AG04449 (cell line): ENCODE measurements at regions of chr21 and their contacts with region 1.

Region 1: DNA sequence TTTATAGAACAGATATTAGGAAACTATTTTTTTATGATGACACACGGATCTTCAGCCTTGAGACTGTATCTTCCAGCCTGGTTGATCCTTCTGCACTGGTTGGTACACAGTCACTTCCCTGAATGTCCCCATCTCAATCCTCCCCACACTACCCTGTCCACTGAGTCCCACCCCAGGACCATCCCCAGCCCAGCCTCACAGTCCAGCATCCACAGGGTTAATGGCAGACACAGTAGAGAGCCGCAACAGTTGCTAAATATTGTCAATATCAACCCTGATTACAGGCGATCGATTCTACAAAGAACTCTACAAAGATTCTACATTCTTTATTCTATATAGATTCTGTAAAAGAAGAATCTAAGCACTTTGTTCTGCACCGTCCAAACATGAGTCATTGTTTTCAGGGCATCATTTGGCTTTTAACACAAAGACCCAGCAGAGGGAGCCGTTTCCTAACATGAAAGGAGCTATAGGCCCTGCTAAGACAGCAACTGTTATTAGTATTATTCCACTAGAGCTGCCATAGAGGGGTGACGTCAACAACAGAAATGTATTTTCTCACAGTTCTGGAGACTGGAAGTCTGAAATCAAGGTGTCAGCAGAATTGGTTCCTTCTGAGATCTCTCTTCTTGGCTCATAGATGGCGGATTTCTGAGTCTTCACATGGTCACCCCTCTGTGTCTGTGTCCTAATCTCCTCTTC is 30.1 kb upstream of the IFNAR2 start:
- DNase-seq: peak; percentile 72
- H3K4me3 ChIP-seq: no peak overlapping the region
- CTCF ChIP-seq: peak; percentile 66

Region 2: GRCh38 chr21:32770871-32771523 is 428.7 kb before region 1 on chr21:
- CTCF ChIA-PET with region 1: interaction called, 13 read pairs
- POLR2A ChIA-PET with region 1: no interaction called
- DNase-seq: no peak
- H3K4me3 ChIP-seq: peak overlapping the region; percentile 86
- CTCF ChIP-seq: no peak

Region 3: DNA sequence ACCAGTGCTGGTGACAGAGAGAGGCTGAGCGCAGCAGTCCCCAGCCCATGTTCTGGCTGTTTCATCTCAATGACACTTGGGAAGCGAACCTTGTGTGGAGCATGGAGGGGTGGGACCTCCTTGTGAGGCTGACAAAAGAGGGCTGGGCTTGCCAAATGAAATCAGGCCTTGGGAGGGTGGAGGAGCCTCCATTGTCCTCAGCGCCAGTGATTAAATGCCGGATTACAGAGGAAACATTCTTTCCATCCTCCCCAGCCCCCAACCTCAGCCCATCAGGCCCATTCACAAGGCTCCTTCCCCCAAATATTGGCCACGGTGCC is 364.8 kb before region 1 on chr21:
- CTCF ChIA-PET with region 1: interaction called, 70 read pairs
- POLR2A ChIA-PET with region 1: no interaction called
- DNase-seq: no peak
- H3K4me3 ChIP-seq: no peak overlapping the region
- CTCF ChIP-seq: no peak

Region 4: DNA sequence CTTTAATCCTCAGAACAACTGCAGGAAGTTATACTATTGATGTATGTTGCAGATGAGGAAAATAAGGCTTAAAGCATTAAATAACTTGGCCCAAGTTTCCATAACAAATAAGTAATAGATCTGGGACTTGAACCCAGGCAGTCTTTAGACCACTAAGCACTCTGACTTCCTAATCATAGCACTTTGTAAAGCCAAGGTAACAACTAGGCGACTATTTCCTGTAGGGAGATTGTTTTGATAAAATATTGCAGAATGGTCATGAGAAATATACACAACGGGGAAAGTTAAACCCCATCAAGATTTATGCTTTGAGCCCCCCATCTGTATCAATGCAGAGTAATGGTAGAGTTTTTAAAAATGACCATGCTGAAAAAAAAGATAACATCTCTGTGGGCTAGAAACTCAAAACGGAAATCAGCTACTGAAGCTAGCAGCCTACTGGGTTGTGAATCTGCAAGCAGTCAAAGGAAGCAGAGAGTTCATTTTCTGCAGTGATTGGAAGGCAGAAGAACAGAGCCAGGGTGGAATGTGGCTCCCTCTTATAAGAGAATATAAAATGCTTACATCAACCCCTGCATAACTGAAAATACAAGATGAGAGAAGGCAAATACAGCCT is 285.1 kb before region 1 on chr21:
- CTCF ChIA-PET with region 1: no interaction called
- POLR2A ChIA-PET with region 1: no interaction called
- DNase-seq: no peak
- H3K4me3 ChIP-seq: no peak overlapping the region
- CTCF ChIP-seq: no peak

Region 5: GRCh38 chr21:33185852-33186251 is 13.8 kb before region 1 on chr21:
- CTCF ChIA-PET with region 1: interaction called, 30 read pairs
- POLR2A ChIA-PET with region 1: interaction called, 3 read pairs
- DNase-seq: no peak
- H3K4me3 ChIP-seq: no peak overlapping the region
- CTCF ChIP-seq: no peak

Region 6: GRCh38 chr21:33380483-33380998 is 180.9 kb after region 1 on chr21:
- CTCF ChIA-PET with region 1: interaction called, 24 read pairs
- POLR2A ChIA-PET with region 1: no interaction called
- DNase-seq: peak; percentile 89
- H3K4me3 ChIP-seq: no peak overlapping the region
- CTCF ChIP-seq: no peak

Region 7: GRCh38 chr21:33451634-33452071 is 252.0 kb after region 1 on chr21:
- CTCF ChIA-PET with region 1: interaction called, 91 read pairs
- POLR2A ChIA-PET with region 1: no interaction called
- DNase-seq: no peak
- H3K4me3 ChIP-seq: no peak overlapping the region
- CTCF ChIP-seq: no peak